MCF 10A (cell line): ENCODE measurements at regions of chr10 and their contacts with region 1.

Region 1: GRCh38 chr10:98262571-98262970 is 5.4 kb downstream of the LOXL4 start:
- DNase-seq: peak; percentile 70
- H3K4me3 Mint-ChIP-seq: no peak overlapping the region
- H3K27ac Mint-ChIP-seq: no peak overlapping the region
- H3K4me1 Mint-ChIP-seq: peaks cover 6% of the 10 kb centered on the region
- H3K27me3 Mint-ChIP-seq: no peaks in the 10 kb centered on the region
- CTCF ChIP-seq: peak; percentile 55

Region 2: GRCh38 chr10:98295907-98296306 is 33.3 kb after region 1 on chr10:
- CTCF ChIA-PET with region 1: interaction called, 14 read pairs
- POLR2A ChIA-PET with region 1: no interaction called
- intact Hi-C with region 1: no loop called
- DNase-seq: peak; percentile 11
- H3K4me3 Mint-ChIP-seq: no peak overlapping the region
- H3K27ac Mint-ChIP-seq: no peak overlapping the region
- H3K4me1 Mint-ChIP-seq: peaks cover 20% of the 10 kb centered on the region
- H3K27me3 Mint-ChIP-seq: peaks cover 12% of the 10 kb centered on the region
- CTCF ChIP-seq: no peak

Region 3: GRCh38 chr10:98314489-98315284 is 52.1 kb after region 1 on chr10:
- CTCF ChIA-PET with region 1: interaction called, 55 read pairs
- POLR2A ChIA-PET with region 1: interaction called, 6 read pairs
- intact Hi-C with region 1: loop called (anchors 1 kb)
- DNase-seq: peak; percentile 54
- H3K4me3 Mint-ChIP-seq: no peak overlapping the region
- H3K27ac Mint-ChIP-seq: no peak overlapping the region
- H3K4me1 Mint-ChIP-seq: peaks cover 19% of the 10 kb centered on the region
- H3K27me3 Mint-ChIP-seq: no peaks in the 10 kb centered on the region
- CTCF ChIP-seq: no peak